Mammary epithelial cell (primary cell): ENCODE measurements at regions of chr19 and their contacts with region 1.

Region 1: DNA sequence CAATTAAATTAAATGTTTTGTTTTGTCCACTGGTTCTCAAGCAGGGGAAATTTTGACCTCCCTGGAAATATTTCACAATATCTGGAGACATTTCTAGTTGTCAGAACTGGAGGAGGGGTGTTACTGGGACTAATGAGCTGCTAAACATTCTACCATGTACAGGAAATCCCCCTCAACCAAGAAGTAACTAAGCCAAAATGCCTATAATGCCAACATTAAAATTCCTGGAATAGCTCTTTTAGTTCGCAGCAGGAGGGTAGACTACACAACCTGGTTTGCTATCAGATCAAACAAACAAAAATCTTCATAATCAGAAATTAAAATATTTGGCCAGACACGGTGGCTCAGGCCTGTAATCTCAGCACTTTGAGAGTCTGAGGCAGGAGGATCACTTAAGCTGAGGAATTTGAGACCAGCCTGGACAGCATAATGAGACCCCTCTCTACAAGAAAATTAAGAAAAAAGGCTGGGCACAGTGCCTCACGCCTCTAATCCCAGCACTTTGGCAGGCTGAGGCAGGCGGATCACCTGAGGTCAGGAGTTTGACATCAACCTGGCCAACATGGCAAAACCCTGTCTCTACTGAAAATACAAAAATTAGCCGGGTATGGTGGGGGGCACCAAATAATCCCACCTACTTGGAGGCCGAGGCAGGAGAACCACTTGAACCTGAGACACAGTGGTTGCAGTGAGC is 13.7 kb upstream of the SMARCA4 start:
- DNase-seq: no peak
- H3K4me3 ChIP-seq: no peak overlapping the region
- H3K27ac ChIP-seq: no peak overlapping the region
- H3K4me1 ChIP-seq: no peaks in the 10 kb centered on the region
- H3K27me3 ChIP-seq: no peaks in the 10 kb centered on the region
- CTCF ChIP-seq: no peak

Region 2: DNA sequence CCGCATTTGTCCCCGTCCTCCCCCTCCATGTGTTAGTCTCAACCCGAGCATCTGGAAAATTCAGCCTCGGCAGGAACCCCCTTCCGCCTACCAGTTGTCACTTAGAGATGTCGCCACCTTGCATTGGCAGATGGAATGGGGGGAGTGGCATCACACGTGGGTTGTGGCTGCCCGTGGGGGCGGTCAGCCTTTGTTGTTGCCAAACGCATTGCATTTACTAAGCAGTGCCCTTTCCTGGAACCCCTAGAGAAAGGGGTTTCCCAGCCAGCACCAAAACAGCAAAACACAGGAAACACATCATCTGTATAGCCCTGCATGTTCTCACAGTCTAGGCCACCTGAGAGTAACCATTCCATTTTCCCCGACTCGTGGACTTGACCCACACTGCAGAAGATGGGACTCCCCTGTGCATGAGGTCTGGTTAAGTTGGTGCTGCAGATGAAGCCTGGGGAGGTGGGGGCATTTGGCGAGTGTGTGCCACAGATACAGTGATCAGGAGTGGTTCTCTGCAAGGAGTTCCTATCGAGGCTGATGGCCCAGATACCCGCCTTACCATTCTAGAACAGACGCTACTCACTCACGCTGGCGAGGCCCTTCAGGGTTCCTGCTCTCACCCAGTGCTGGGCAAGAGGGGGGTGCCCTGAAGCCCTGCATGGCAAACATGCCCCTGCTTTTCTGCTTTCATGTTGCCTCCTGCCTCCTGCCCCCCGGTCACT is 149.4 kb before region 1 on chr19:
- CTCF ChIA-PET with region 1: no interaction called
- dilution Hi-C with region 1: no loop called
- in situ Hi-C with region 1: no loop called
- intact Hi-C with region 1: no loop called
- DNase-seq: no peak
- H3K4me3 ChIP-seq: no peak overlapping the region
- H3K27ac ChIP-seq: no peak overlapping the region
- H3K4me1 ChIP-seq: no peaks in the 10 kb centered on the region
- H3K27me3 ChIP-seq: no peaks in the 10 kb centered on the region
- CTCF ChIP-seq: no peak

Region 3: GRCh38 chr19:11005521-11005920 is 58.4 kb after region 1 on chr19:
- CTCF ChIA-PET with region 1: interaction called, 13 read pairs
- dilution Hi-C with region 1: no loop called
- in situ Hi-C with region 1: no loop called
- intact Hi-C with region 1: loop called (anchors 5 kb)
- DNase-seq: no peak
- H3K4me3 ChIP-seq: no peak overlapping the region
- H3K27ac ChIP-seq: no peak overlapping the region
- H3K4me1 ChIP-seq: no peaks in the 10 kb centered on the region
- H3K27me3 ChIP-seq: no peaks in the 10 kb centered on the region
- CTCF ChIP-seq: no peak

Region 4: GRCh38 chr19:11035441-11036377 is 88.6 kb after region 1 on chr19:
- CTCF ChIA-PET with region 1: interaction called, 4 read pairs
- dilution Hi-C with region 1: no loop called
- in situ Hi-C with region 1: no loop called
- intact Hi-C with region 1: loop called (anchors 1 kb)
- DNase-seq: peak; percentile 80
- H3K4me3 ChIP-seq: no peak overlapping the region
- H3K27ac ChIP-seq: no peak overlapping the region
- H3K4me1 ChIP-seq: peaks cover 13% of the 10 kb centered on the region
- H3K27me3 ChIP-seq: no peaks in the 10 kb centered on the region
- CTCF ChIP-seq: peak; percentile 88 to 98

Region 5: GRCh38 chr19:11106477-11106876 is 159.4 kb after region 1 on chr19:
- CTCF ChIA-PET with region 1: no interaction called
- dilution Hi-C with region 1: no loop called
- in situ Hi-C with region 1: no loop called
- intact Hi-C with region 1: no loop called
- DNase-seq: no peak
- H3K4me3 ChIP-seq: no peak overlapping the region
- H3K27ac ChIP-seq: no peak overlapping the region
- H3K4me1 ChIP-seq: no peaks in the 10 kb centered on the region
- H3K27me3 ChIP-seq: no peaks in the 10 kb centered on the region
- CTCF ChIP-seq: no peak